Activated B cell treated with CpG ODN at 0.5 μM for 24 hours (primary cell): ENCODE measurements at regions of chr9 and their contacts with region 1.

Region 1: DNA sequence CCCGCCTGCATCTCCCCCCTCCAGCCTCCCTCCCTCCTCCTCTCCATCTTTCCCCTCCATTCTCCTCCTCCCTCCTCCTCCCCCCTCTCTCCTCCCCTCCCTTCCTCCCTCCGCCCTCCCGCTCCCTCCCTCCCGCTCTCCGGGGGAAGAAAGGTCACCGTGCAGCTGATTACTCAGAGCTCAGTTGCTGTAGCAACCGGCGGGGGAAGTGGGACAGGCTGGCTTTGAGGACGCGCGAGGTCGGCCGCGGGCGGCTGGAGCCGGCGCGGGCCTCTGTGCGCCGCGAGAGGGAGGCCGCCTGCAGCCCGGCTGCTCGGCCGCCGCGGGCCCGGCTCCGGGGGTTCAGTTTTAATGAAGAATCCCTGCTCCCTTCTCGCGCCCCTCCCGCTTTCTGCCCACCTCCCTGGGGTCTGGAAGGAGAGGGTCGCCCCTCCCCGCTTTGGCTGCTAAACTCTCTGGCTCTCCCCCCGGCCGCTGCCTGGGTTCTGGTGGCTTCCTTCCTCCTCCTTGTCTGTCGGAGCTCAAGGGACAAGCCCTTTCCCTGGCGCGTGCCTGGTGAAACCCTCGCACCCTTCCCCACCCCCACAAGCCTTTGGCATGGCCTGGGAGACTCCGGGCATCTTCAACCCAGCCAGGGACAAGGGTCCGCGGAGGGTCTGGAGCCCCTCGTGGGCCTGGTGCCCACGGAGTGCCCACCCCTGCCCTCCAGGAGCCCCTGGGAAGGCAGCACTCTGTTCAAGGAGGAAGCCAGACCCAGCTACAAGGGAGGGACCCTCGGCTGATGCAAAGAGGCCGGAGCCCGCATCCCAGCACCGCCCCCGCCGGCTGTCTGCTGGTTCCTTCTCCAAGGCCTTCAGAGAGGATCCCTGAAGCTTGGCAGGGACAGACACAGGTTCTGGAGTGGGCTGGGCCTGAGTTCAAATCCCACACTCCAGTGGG is 160.3 kb downstream of the C9orf50 start:
- DNase-seq: peak; percentile 70
- ATAC-seq: peak; percentile 85
- H3K4me3 Mint-ChIP-seq: peak overlapping the region; percentile 79
- H3K27ac Mint-ChIP-seq: peak overlapping the region; percentile 83
- H3K4me1 Mint-ChIP-seq: peaks cover 22% of the 10 kb centered on the region
- H3K27me3 Mint-ChIP-seq: peaks cover 5% of the 10 kb centered on the region
- CTCF ChIP-seq: no peak

Region 2: DNA sequence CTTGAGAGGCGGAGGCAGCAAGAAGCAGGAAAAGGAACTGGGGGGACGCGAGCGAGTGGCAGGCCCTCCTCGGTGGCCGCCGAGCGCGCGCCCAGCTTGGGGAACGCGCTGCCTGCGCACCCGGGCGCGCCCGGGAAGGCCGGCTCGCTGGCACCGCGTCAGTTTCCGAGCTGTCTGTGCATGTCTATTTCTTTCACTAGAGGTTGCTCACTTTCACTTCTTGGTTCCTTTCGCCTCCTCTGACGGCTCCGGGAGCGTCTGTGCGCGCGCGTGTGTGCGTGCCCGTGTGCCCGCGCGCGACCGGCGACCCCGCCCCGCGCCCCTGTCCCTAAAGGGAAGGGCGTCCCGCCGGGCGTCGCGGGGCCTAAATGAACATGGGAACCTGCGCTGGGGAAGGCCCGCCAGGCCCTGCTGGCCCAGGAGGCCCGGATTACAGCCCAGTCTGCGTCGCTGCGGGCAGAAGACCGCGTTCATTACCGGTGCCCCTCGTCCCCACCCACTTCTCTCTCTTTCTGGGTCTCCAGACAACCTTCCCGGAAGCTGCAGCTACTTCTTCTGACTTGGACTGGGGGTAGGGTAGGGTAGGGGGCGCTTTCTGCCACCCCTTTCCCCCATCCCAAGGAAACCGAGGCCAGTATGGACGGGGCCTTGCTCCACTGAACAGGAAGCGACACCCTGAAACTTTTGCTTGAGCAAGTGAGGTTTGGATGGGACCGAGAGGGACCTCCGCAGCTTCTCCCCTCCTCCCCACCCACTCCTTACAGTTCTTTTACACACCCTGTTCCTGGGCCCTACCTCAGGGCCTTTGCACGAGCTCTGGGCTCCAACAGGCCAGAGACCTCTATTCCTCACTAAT is 76.8 kb before region 1 on chr9:
- CTCF ChIA-PET with region 1: interaction called, 3 read pairs
- POLR2A ChIA-PET with region 1: interaction called, 33 read pairs
- intact Hi-C with region 1: loop called (anchors 1 kb)
- DNase-seq: peak; percentile 82
- ATAC-seq: peak; percentile 91
- H3K4me3 Mint-ChIP-seq: peak overlapping the region; percentile 80
- H3K27ac Mint-ChIP-seq: peak overlapping the region; percentile 90
- H3K4me1 Mint-ChIP-seq: peaks cover 24% of the 10 kb centered on the region
- H3K27me3 Mint-ChIP-seq: peaks cover 4% of the 10 kb centered on the region
- CTCF ChIP-seq: no peak

Region 3: GRCh38 chr9:129436751-129437625 is 23.6 kb before region 1 on chr9:
- CTCF ChIA-PET with region 1: no interaction called
- POLR2A ChIA-PET with region 1: interaction called, 5 read pairs
- intact Hi-C with region 1: loop called (anchors 2 kb)
- DNase-seq: no peak
- ATAC-seq: no peak
- H3K4me3 Mint-ChIP-seq: peak overlapping the region; percentile 74
- H3K27ac Mint-ChIP-seq: peak overlapping the region; percentile 50
- H3K4me1 Mint-ChIP-seq: peaks cover 22% of the 10 kb centered on the region
- H3K27me3 Mint-ChIP-seq: peaks cover 55% of the 10 kb centered on the region
- CTCF ChIP-seq: no peak

Region 4: GRCh38 chr9:129487642-129488409 is 27.2 kb after region 1 on chr9:
- CTCF ChIA-PET with region 1: interaction called, 3 read pairs
- POLR2A ChIA-PET with region 1: interaction called, 22 read pairs
- intact Hi-C with region 1: loop called (anchors 1 kb)
- DNase-seq: no peak
- ATAC-seq: peak; percentile 12
- H3K4me3 Mint-ChIP-seq: peak overlapping the region; percentile 81
- H3K27ac Mint-ChIP-seq: peak overlapping the region; percentile 88
- H3K4me1 Mint-ChIP-seq: peaks cover 39% of the 10 kb centered on the region
- H3K27me3 Mint-ChIP-seq: peaks cover 11% of the 10 kb centered on the region
- CTCF ChIP-seq: no peak